ENCODE measurements at regions of chr3 and their contacts with region 1.

Region 1: DNA sequence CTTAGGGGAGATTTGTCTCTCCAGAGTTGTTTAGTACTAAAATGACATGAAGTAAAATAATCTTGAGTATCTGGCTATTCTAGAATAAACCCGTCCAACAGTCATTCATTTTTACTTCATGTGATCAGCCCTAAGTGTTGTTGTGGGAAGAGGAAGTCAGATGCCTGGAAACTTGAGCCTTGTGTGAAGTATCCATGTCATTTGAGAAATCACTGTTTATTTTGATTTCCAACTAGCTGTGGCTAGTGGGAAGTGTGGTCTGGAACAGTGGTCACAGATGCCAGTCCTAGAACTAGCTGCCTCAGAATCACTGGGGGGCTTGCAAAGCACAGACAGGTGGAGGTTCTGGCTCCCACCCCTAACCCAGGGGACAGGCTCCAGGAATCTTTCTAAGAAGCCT is 77.7 kb upstream of the LIMD1 start:
- DNase-seq: no peak
- H3K4me3 ChIP-seq: no peak overlapping the region
- H3K27ac ChIP-seq: no peak overlapping the region
- H3K4me1 ChIP-seq: no peaks in the 10 kb centered on the region
- H3K27me3 ChIP-seq: no peaks in the 10 kb centered on the region
- CTCF ChIP-seq: no peak
- POLR2A ChIP-seq: no peak

Region 2: DNA sequence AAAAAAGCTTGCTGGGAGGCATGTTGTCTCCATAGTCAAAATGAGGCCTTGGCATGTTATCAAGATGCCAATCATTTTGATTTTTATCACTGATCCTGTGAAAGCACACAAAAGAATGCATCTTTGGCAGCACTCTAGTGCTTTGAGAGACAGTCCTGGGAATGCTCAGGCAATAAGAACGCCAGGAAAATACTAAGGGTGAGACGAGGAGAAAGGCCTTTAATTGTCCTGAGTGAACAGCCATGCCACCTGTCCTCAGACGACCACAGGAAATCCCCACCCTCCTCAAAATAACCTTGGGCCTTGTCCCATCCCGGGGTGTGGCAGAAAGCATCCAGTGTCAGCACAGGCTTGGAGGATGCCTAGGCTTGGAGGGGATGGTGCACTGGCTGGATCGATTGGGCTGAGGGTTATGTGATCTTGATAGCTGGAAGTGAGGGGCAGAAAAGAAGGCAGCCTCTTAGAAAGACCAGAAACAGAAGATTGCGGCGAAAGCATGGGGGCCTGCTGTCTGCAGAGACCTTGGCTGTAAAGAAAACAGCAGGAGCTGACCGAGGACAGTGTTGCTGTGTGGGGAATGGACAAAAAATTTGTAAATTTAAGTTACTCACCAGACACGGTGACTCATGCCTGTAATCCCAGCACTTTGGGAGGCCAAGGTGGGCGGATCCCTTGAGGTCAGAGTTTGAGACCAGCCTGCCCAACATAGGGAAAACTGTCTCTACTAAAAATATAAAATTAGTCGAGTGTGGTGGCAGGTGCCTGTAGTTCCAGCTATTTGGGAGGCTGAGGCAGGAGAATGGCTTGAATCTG is 298.0 kb before region 1 on chr3:
- intact Hi-C with region 1: no loop called
- DNase-seq: no peak
- H3K4me3 ChIP-seq: no peak overlapping the region
- H3K27ac ChIP-seq: no peak overlapping the region
- H3K4me1 ChIP-seq: no peaks in the 10 kb centered on the region
- H3K27me3 ChIP-seq: no peaks in the 10 kb centered on the region
- CTCF ChIP-seq: no peak
- POLR2A ChIP-seq: no peak

Region 3: DNA sequence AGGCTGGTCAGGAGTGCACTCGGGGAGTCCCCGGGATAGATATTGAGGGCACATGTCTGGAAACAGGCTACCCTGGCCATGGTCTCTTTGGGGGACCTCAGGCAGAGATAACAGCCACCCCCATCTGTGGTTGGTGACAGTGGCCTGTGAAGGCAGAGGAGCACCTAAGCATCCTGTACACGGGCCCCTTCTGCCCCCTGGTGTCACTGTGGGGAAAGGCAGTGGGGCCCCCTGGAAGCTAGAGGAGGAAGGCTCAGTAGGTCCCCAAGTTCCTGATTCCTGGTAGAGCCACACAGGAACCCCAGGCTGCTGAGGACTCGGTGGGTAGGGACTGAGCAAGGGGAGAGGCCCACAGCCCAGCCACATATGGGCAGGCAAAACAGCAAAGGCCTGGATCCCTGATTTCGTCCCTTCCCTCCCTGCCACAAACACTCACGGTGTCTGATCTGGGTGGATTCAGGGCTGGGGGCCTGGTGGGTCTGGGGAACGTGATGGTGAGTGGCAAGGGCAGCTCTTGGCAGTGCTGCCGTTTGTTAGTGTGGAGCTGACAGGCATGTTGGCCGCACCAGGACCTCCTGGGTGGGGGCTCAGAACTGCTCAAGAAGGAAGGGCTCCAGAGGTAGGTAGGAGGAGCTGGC is 412.3 kb after region 1 on chr3:
- intact Hi-C with region 1: loop called (anchors 10 kb)
- DNase-seq: no peak
- H3K4me3 ChIP-seq: no peak overlapping the region
- H3K27ac ChIP-seq: no peak overlapping the region
- H3K4me1 ChIP-seq: no peaks in the 10 kb centered on the region
- H3K27me3 ChIP-seq: no peaks in the 10 kb centered on the region
- CTCF ChIP-seq: peak in 3 of 4 experiments; percentile 40 to 65 (median 42)
- POLR2A ChIP-seq: no peak

Measured in prostate gland (tissue), 2 donors.